Right ventricle myocardium superior (tissue), 1 donor: ENCODE measurements at regions of chr6 and their contacts with region 1.

Region 1: GRCh38 chr6:26537846-26538571 is at the start of gene HMGN4:
- DNase-seq: peak; percentile 88
- ATAC-seq: peak; percentile 90
- total RNA-seq, gene HMGN4: 25.1 TPM

Region 2: DNA sequence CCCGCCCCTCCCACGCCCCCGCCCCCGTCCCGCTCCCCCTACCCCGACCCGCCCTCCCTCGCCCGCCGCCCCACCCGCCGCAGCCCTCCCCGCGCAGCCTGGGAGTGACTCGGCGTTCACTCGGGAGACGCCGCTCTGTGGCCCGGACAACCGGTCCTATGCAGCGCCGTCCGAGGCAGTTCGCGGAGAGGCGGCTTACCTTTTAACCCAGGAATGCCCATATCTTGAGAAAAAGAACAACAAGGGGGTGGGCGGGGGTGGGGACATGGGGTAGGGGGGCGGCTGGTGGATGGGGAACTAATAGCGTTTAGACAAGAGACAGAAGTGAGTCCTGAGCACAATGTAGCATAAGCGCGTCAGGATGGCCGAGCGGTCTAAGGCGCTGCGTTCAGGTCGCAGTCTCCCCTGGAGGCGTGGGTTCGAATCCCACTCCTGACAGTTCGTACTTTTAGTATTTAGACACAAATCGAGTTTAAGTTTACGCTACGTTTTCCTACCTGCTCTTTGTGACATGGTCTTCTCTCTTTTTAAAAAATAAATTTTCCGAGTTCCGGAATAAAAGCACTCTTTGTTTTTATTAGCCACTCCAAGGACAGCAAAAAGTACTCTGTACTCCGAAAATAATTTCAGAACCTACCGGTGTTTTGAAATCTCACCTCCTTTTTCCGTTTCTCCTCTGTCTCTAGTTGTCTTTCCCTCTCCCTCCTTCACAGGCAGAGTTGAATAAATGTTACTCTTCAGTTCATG is 17.0 kb before region 1 on chr6:
- intact Hi-C with region 1: loop called (anchors 2 kb)
- DNase-seq: peak; percentile 90
- ATAC-seq: peak; percentile 93

Region 3: GRCh38 chr6:26553635-26554446 is 15.8 kb after region 1 on chr6:
- intact Hi-C with region 1: loop called (anchors 2 kb)
- DNase-seq: peak; percentile 84
- ATAC-seq: peak; percentile 85